ENCODE measurements at regions of chr10 and their contacts with region 1.

Region 1: DNA sequence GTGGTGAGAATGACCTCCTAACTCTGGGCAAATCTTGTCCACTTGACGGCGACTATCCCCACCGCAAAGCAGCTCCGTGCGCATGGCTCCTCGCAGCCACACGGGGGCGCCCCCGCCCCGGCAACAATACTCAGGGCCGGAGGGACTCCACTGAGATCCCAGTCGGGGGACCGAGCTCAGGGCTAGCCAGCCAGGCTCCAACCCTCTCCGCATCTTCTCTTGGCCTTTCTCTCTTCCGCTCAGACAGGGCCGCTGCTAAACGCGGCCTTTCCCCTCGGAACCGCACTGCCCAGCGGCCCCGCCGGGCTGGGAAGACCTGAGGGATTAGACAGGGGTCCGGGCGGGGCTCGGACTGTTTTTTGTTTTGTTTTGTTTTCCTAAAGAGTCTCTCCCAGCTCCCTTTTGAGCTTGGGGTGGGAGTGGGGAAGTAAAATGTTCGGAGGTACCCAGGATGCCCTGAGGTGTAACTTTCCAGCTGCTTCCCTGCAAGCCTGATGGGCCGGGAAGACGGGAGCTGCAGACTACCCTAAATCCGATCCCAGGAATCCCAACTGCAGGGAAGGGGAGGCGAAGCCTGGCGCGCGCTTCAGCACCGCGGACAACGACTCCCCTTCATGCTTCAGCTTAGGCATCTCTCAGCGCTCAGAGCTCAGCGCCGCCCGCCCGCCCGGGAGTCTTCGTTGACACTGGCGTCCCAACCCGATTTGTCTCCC is 2.7 kb downstream of the KCNIP2 start:
- DNase-seq: peak; percentile 89
- ATAC-seq: peak; percentile 68
- H3K4me3 Mint-ChIP-seq: peak overlapping the region; percentile 73
- H3K27ac Mint-ChIP-seq: no peak overlapping the region
- H3K4me1 Mint-ChIP-seq: peaks cover 44% of the 10 kb centered on the region
- H3K27me3 Mint-ChIP-seq: peaks cover 9% of the 10 kb centered on the region

Region 2: DNA sequence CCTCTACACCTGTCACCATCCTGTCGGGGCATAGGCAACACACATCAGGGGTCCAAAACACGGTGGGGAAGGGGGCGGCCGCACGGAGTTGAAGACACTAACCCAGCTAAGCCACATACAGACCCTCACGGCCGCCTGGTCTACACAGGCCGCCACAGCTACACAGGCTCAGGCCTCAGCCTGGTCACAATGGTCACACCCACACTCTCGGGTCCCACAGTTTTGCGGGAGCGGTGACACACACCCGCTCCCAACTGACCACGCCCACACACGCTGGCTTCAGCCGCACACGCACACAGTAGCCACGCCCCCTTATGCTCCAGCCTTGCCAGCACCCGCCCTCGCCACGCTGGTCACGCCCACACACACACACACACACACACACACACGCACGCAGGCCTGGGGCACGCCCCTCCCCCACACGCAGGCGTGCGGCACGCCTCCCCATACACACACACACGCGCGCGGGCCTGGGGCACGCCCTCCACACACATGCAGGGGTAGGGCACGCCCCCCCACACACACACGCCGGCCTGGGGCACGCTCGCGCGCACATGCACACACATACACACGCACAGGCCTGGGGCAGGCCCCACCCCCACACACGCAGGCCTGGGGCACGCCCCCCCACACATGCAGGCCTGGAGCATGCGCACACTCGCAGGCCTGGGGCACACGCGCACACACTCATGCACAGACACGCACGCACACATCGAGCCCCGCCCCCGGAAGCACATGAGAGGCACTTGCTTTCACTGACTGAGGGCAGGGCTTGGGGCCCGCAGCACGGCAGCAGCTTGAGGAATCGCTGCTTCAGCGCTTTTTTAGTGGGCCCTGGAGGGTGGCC is 10.4 kb before region 1 on chr10:
- CTCF ChIA-PET with region 1: interaction called, 12 read pairs
- POLR2A ChIA-PET with region 1: interaction called, 15 read pairs
- intact Hi-C with region 1: no loop called
- DNase-seq: peak; percentile 96
- ATAC-seq: peak; percentile 77
- H3K4me3 Mint-ChIP-seq: peak overlapping the region; percentile 70
- H3K27ac Mint-ChIP-seq: peak overlapping the region; percentile 98
- H3K4me1 Mint-ChIP-seq: peaks cover 56% of the 10 kb centered on the region
- H3K27me3 Mint-ChIP-seq: no peaks in the 10 kb centered on the region

Region 3: GRCh38 chr10:101858723-101859500 is 18.0 kb after region 1 on chr10:
- CTCF ChIA-PET with region 1: interaction called, 25 read pairs
- POLR2A ChIA-PET with region 1: no interaction called
- intact Hi-C with region 1: no loop called
- DNase-seq: no peak
- ATAC-seq: peak; percentile 55
- H3K4me3 Mint-ChIP-seq: no peak overlapping the region
- H3K27ac Mint-ChIP-seq: no peak overlapping the region
- H3K4me1 Mint-ChIP-seq: peaks cover 4% of the 10 kb centered on the region
- H3K27me3 Mint-ChIP-seq: no peaks in the 10 kb centered on the region

Region 4: GRCh38 chr10:101968940-101969321 is 128.0 kb after region 1 on chr10:
- CTCF ChIA-PET with region 1: interaction called, 4 read pairs
- POLR2A ChIA-PET with region 1: interaction called, 10 read pairs
- intact Hi-C with region 1: no loop called
- DNase-seq: no peak
- ATAC-seq: peak; percentile 12
- H3K4me3 Mint-ChIP-seq: no peak overlapping the region
- H3K27ac Mint-ChIP-seq: peak overlapping the region; percentile 56
- H3K4me1 Mint-ChIP-seq: peaks cover 33% of the 10 kb centered on the region
- H3K27me3 Mint-ChIP-seq: no peaks in the 10 kb centered on the region

Region 5: GRCh38 chr10:102009801-102010425 is 169.0 kb after region 1 on chr10:
- CTCF ChIA-PET with region 1: interaction called, 145 read pairs
- POLR2A ChIA-PET with region 1: no interaction called
- intact Hi-C with region 1: loop called (anchors 1 kb)
- DNase-seq: peak; percentile 46
- ATAC-seq: peak; percentile 84
- H3K4me3 Mint-ChIP-seq: no peak overlapping the region
- H3K27ac Mint-ChIP-seq: no peak overlapping the region
- H3K4me1 Mint-ChIP-seq: no peaks in the 10 kb centered on the region
- H3K27me3 Mint-ChIP-seq: no peaks in the 10 kb centered on the region

Region 6: GRCh38 chr10:102055647-102056419 is 214.9 kb after region 1 on chr10 and contains the start of gene ARMH3:
- CTCF ChIA-PET with region 1: interaction called, 10 read pairs
- POLR2A ChIA-PET with region 1: no interaction called
- intact Hi-C with region 1: no loop called
- DNase-seq: peak; percentile 96
- ATAC-seq: peak; percentile 98
- H3K4me3 Mint-ChIP-seq: peak within 1 kb of the TSS; percentile 95
- H3K27ac Mint-ChIP-seq: peak within 1 kb of the TSS; percentile 93
- H3K4me1 Mint-ChIP-seq: peaks cover 40% of the 10 kb centered on the region
- H3K27me3 Mint-ChIP-seq: no peaks in the 10 kb centered on the region
- total RNA-seq, gene ARMH3: 16.0 to 21.0 TPM

Region 7: DNA sequence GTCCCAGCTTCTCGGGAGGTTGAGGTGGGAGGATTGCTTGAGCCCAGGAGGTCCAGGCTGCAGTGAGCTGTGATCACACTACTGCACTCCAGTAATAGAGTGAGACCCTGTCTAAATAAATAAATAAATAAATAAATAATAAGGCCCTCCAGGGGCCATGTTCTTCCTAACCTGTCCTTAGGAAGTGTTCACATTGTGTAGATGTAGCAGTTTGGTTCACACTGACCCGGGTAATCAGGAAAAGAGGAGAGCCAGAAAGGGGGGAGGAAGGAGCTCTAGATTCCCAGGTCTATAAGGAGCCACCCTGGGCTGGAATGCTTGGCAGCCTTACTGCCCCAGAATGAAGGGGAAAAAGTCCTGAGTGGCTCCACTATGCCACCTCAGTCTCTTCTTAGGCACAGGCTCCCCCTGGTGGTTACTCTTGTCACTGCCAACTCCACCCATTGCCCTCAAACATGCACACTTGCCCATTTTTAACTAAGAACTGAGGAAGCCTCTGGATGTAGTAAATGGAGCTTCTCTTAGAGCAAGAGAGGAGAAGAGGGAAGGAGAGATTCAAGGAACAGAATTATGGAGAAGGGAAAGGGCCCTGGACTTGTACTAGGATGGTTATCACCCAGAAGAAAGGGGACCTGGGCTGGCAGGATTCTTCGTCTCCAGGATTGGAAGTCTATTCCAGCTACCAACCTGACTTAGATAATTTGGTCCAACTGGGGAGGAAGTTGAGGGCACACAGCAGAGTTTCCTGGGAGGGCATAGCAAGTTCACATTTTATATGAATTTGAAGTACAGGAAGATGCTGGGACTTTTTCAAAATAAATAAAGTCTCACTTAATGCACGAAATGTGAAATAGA is 232.0 kb after region 1 on chr10:
- CTCF ChIA-PET with region 1: interaction called, 34 read pairs
- POLR2A ChIA-PET with region 1: interaction called, 4 read pairs
- intact Hi-C with region 1: loop called (anchors 1 kb)
- DNase-seq: peak; percentile 89
- ATAC-seq: peak; percentile 97
- H3K4me3 Mint-ChIP-seq: no peak overlapping the region
- H3K27ac Mint-ChIP-seq: no peak overlapping the region
- H3K4me1 Mint-ChIP-seq: peaks cover 2% of the 10 kb centered on the region
- H3K27me3 Mint-ChIP-seq: no peaks in the 10 kb centered on the region

Region 8: GRCh38 chr10:102334101-102334500 is 493.2 kb after region 1 on chr10:
- CTCF ChIA-PET with region 1: no interaction called
- POLR2A ChIA-PET with region 1: no interaction called
- intact Hi-C with region 1: no loop called
- DNase-seq: no peak
- ATAC-seq: no peak
- H3K4me3 Mint-ChIP-seq: no peak overlapping the region
- H3K27ac Mint-ChIP-seq: no peak overlapping the region
- H3K4me1 Mint-ChIP-seq: peaks cover 19% of the 10 kb centered on the region
- H3K27me3 Mint-ChIP-seq: no peaks in the 10 kb centered on the region